Heart right ventricle (tissue), 16 donors: ENCODE measurements at regions of chr3 and their contacts with region 1.

Region 1: GRCh38 chr3:70539908-70540307 is 227.5 kb upstream of the MDFIC2 start:
- DNase-seq: no peak
- ATAC-seq: no peak
- H3K4me3 ChIP-seq: no peak overlapping the region
- H3K27ac ChIP-seq: no peak overlapping the region
- H3K4me1 ChIP-seq: no peaks in the 10 kb centered on the region
- H3K27me3 ChIP-seq: peaks cover 0 to 8% (median 3%) of the 10 kb centered on the region in 7 donors
- CTCF ChIP-seq: peak in 1 of 9 donors; percentile 6

Region 2: DNA sequence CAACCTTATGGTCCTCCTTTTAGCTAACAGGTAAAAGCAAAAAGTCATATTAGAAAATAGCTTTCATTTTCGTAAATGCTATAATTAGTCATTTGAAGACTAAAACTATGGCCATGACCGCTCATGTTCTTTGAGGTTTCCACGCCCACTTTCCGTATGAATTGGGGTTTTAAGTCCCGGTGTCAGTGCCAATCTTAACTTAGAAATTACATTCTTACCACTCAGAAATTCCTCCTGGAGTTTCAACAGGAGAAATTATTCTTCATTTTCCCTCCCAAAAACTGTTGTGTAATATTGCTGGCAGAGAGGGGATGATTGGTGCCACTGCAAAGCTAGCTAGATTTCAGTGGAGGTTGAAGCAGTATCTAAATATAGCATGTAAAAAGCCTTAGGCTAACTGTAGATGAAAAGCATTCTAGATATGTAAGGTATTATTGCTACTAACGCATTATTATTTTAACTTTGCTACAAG is 156.5 kb before region 1 on chr3:
- intact Hi-C with region 1: no loop called
- DNase-seq: no peak
- ATAC-seq: no peak
- H3K4me3 ChIP-seq: no peak overlapping the region
- H3K27ac ChIP-seq: no peak overlapping the region
- H3K4me1 ChIP-seq: no peaks in the 10 kb centered on the region
- H3K27me3 ChIP-seq: no peaks in the 10 kb centered on the region
- CTCF ChIP-seq: no peak

Region 3: GRCh38 chr3:70471464-70472342 is 68.2 kb before region 1 on chr3:
- intact Hi-C with region 1: no loop called
- DNase-seq: no peak
- ATAC-seq: no peak
- H3K4me3 ChIP-seq: no peak overlapping the region
- H3K27ac ChIP-seq: no peak overlapping the region
- H3K4me1 ChIP-seq: no peaks in the 10 kb centered on the region
- H3K27me3 ChIP-seq: peaks cover 0 to 5% (median 0%) of the 10 kb centered on the region in 7 donors
- CTCF ChIP-seq: no peak

Region 4: GRCh38 chr3:71657831-71658530 is 1118.1 kb after region 1 on chr3:
- intact Hi-C with region 1: loop called in 4 of 10 experiments (anchors 5 to 10 kb)
- DNase-seq: peak; percentile 80 to 82
- ATAC-seq: peak; percentile 74 to 95 (median 93)
- H3K4me3 ChIP-seq: no peak overlapping the region
- H3K27ac ChIP-seq: peak overlapping the region in 6 of 10 donors; percentile 1 to 68 (median 36)
- H3K4me1 ChIP-seq: peaks cover 0 to 16% (median 6%) of the 10 kb centered on the region in 9 donors
- H3K27me3 ChIP-seq: no peaks in the 10 kb centered on the region
- CTCF ChIP-seq: no peak